ENCODE measurements at regions of chr20 and their contacts with region 1.

Region 1: DNA sequence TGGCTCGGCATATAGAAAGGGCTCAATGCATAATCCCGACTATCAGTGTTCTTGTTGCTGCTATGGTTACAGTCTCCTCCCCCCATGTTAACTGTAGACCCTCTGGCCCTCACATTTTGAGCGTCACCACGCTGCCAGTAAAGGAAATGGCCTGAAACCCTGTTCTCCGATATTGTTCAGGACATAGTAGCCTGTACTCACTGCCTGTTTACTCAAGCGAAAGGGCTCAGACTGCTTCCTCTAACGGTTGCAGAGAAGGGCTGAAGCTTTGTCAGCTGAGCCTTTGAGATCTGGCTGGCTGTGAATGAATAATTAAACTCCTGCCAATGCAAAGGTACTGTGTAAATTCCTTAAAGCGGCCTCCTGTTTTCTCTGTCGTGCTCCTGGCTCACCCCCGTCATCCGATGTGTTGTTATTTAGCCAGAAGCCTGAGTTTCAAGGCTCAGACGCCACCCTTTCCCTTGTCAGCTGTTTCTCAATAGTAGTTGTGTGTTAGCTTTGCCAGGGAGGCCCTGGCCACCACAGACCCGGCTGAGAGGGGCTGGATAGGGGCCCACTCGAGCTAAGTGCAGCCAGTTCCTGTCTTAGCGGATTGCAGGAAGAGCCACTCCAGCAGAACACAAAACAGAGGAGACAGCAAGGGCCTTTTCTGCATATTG is 31.2 kb upstream of the RALGAPA2 start:
- DNase-seq: peak; percentile 63 to 85 (median 78)
- ATAC-seq: peak; percentile 83 to 96 (median 92)
- H3K4me3 ChIP-seq: peak overlapping the region in 5 of 12 donors; percentile 2 to 24 (median 15)
- H3K27ac ChIP-seq: peak overlapping the region; percentile 49 to 93 (median 86)
- H3K4me1 ChIP-seq: peaks cover 5 to 37% (median 29%) of the 10 kb centered on the region in 12 donors
- H3K27me3 ChIP-seq: no peaks in the 10 kb centered on the region
- CTCF ChIP-seq: no peak
- POLR2A ChIP-seq: no peak

Region 2: DNA sequence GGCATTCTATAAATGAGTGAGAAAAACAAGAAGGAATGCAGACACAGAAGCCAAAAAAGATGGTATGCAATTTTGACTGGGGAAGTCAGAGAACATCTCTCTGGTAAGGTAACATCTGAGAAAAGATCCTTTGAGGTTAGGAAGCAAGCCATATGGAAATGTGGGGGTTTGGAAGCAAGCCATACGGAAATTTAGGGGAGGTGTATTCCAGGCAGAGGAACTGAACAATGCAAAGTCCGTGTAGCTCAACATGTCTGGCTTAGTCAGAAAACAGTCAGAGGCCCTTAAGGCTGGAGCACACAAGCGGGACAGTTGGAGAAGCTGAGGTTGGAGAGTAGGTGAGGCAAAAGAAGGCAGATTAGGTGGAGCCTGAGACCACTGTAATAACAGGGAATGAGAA is 66.5 kb before region 1 on chr20:
- intact Hi-C with region 1: loop called in 1 of 10 experiments (anchors 10 kb)
- DNase-seq: no peak
- ATAC-seq: no peak
- H3K4me3 ChIP-seq: no peak overlapping the region
- H3K27ac ChIP-seq: no peak overlapping the region
- H3K4me1 ChIP-seq: peaks cover 0 to 15% (median 8%) of the 10 kb centered on the region in 12 donors
- H3K27me3 ChIP-seq: no peaks in the 10 kb centered on the region
- CTCF ChIP-seq: no peak
- POLR2A ChIP-seq: no peak

Region 3: DNA sequence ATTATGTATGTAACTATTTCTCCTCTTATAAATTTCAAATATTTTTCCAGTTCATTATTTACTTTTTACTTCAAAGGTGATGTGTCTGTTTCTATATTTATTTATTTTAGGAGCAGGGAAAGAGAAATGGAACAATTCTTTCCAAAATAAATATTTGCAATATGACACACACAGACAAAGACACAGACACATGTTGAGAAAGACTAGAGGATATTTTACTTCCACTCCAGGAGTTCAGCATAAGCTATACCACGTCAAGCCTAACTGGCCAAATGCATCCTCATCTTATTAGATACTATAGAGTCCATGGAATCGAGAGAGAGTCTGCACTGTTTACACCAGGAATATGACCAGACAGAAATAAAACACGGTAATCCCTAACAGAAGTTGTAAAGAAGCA is 44.5 kb before region 1 on chr20:
- intact Hi-C with region 1: no loop called
- DNase-seq: no peak
- ATAC-seq: no peak
- H3K4me3 ChIP-seq: no peak overlapping the region
- H3K27ac ChIP-seq: no peak overlapping the region
- H3K4me1 ChIP-seq: peaks cover 0 to 24% (median 2%) of the 10 kb centered on the region in 12 donors
- H3K27me3 ChIP-seq: no peaks in the 10 kb centered on the region
- CTCF ChIP-seq: no peak
- POLR2A ChIP-seq: no peak